CD4-positive, alpha-beta memory T cell (primary cell): ENCODE measurements at regions of chr6 and their contacts with region 1.

Region 1: GRCh38 chr6:138403801-138404661 is at the start of gene HEBP2:
- DNase-seq: peak; percentile 87 to 97 (median 90)
- H3K4me3 ChIP-seq: peak within 1 kb of the TSS; percentile 2 to 73
- H3K4me3 Mint-ChIP-seq: peak within 1 kb of the TSS; percentile 84 to 90 (median 88)
- H3K27ac ChIP-seq: peak within 1 kb of the TSS; percentile 72
- H3K27ac Mint-ChIP-seq: peak within 1 kb of the TSS; percentile 84 to 92 (median 88)
- H3K4me1 ChIP-seq: peaks cover 22% of the 10 kb centered on the region
- H3K4me1 Mint-ChIP-seq: peaks cover 13 to 30% (median 26%) of the 10 kb centered on the region in 4 donors
- H3K27me3 ChIP-seq: no peaks in the 10 kb centered on the region
- H3K27me3 Mint-ChIP-seq: no peaks in the 10 kb centered on the region
- total RNA-seq, gene HEBP2: 47.2 to 52.7 TPM

Region 2: DNA sequence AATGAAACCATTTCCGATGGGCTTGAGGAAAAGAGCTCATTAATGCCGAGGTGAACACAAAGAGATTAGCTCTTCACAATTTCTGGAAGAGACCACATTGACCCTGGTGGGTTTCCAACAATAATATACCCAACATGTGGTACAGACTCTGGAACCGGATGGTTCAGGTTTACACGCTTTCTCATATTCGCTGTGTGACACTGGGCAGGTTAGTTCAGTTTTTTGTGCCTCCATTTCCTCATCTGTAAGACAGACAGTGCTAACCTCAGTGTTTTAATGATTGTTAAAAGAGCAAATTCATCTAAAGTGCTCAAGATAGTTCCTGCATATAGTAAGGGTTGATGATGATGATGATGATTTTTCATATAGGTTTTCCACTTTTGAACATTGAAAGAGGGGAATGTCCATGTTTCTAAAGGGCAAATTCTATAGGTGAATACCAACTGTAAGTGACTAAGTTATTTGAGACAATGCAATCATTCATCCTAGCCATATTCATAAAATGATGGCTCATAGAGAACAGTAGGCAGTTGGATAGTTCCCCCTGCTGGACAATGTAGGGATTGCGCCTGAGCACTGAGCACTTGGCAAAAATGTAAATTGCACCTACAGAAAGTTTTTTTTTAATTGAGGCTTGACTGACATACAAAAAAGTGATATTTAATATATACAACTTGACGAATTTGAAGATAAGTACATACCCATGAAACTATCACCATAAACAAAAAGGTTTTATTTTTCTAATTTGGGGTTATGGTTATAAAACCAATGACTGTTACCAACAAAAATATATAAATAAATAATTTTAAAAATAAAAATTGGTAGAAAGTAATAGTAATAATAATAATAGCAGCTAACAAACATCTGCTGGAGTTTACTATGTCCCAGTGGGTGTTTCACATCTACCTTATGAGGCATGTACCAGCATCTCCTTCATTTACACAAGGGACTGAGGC is 294.7 kb before region 1 on chr6:
- CTCF ChIA-PET with region 1: interaction called, 17 read pairs
- POLR2A ChIA-PET with region 1: no interaction called
- intact Hi-C with region 1: loop called (anchors 2 kb)
- DNase-seq: peak; percentile 69 to 75 (median 75)
- H3K4me3 ChIP-seq: no peak overlapping the region
- H3K4me3 Mint-ChIP-seq: peak overlapping the region in 2 of 8 donors; percentile 52 to 55
- H3K27ac ChIP-seq: no peak overlapping the region
- H3K27ac Mint-ChIP-seq: peak overlapping the region in 3 of 7 donors; percentile 8 to 65 (median 11)
- H3K4me1 ChIP-seq: peaks cover 25% of the 10 kb centered on the region
- H3K4me1 Mint-ChIP-seq: peaks cover 16 to 37% (median 17%) of the 10 kb centered on the region in 4 donors
- H3K27me3 ChIP-seq: no peaks in the 10 kb centered on the region
- H3K27me3 Mint-ChIP-seq: peaks cover 3% of the 10 kb centered on the region in 2 donors

Region 3: GRCh38 chr6:138287144-138287955 is 116.7 kb before region 1 on chr6:
- CTCF ChIA-PET with region 1: interaction called, 3 read pairs
- POLR2A ChIA-PET with region 1: no interaction called
- intact Hi-C with region 1: loop called (anchors 10 kb)
- DNase-seq: peak; percentile 26 to 53 (median 39)
- H3K4me3 ChIP-seq: no peak overlapping the region
- H3K4me3 Mint-ChIP-seq: peak overlapping the region in 1 of 8 donors; percentile 48
- H3K27ac ChIP-seq: no peak overlapping the region
- H3K27ac Mint-ChIP-seq: peak overlapping the region in 1 of 7 donors; percentile 31
- H3K4me1 ChIP-seq: no peaks in the 10 kb centered on the region
- H3K4me1 Mint-ChIP-seq: peaks cover 0 to 1% (median 0%) of the 10 kb centered on the region in 4 donors
- H3K27me3 ChIP-seq: no peaks in the 10 kb centered on the region
- H3K27me3 Mint-ChIP-seq: peaks cover 0 to 3% of the 10 kb centered on the region in 2 donors

Region 4: GRCh38 chr6:138415125-138415524 is 11.1 kb after region 1 on chr6:
- CTCF ChIA-PET with region 1: interaction called, 3 read pairs
- POLR2A ChIA-PET with region 1: interaction called, 10 read pairs
- intact Hi-C with region 1: no loop called
- DNase-seq: no peak
- H3K4me3 ChIP-seq: no peak overlapping the region
- H3K4me3 Mint-ChIP-seq: no peak overlapping the region
- H3K27ac ChIP-seq: no peak overlapping the region
- H3K27ac Mint-ChIP-seq: no peak overlapping the region
- H3K4me1 ChIP-seq: no peaks in the 10 kb centered on the region
- H3K4me1 Mint-ChIP-seq: peaks cover 3 to 8% (median 5%) of the 10 kb centered on the region in 4 donors
- H3K27me3 ChIP-seq: no peaks in the 10 kb centered on the region
- H3K27me3 Mint-ChIP-seq: no peaks in the 10 kb centered on the region

Region 5: GRCh38 chr6:138440758-138441357 is 36.8 kb after region 1 on chr6:
- CTCF ChIA-PET with region 1: no interaction called
- POLR2A ChIA-PET with region 1: no interaction called
- intact Hi-C with region 1: no loop called
- DNase-seq: no peak
- H3K4me3 ChIP-seq: no peak overlapping the region
- H3K4me3 Mint-ChIP-seq: no peak overlapping the region
- H3K27ac ChIP-seq: no peak overlapping the region
- H3K27ac Mint-ChIP-seq: no peak overlapping the region
- H3K4me1 ChIP-seq: no peaks in the 10 kb centered on the region
- H3K4me1 Mint-ChIP-seq: no peaks in the 10 kb centered on the region
- H3K27me3 ChIP-seq: no peaks in the 10 kb centered on the region
- H3K27me3 Mint-ChIP-seq: no peaks in the 10 kb centered on the region

Region 6: GRCh38 chr6:138493413-138493812 is 89.4 kb after region 1 on chr6:
- CTCF ChIA-PET with region 1: no interaction called
- POLR2A ChIA-PET with region 1: no interaction called
- intact Hi-C with region 1: no loop called
- DNase-seq: no peak
- H3K4me3 ChIP-seq: no peak overlapping the region
- H3K4me3 Mint-ChIP-seq: no peak overlapping the region
- H3K27ac ChIP-seq: no peak overlapping the region
- H3K27ac Mint-ChIP-seq: no peak overlapping the region
- H3K4me1 ChIP-seq: no peaks in the 10 kb centered on the region
- H3K4me1 Mint-ChIP-seq: no peaks in the 10 kb centered on the region
- H3K27me3 ChIP-seq: no peaks in the 10 kb centered on the region
- H3K27me3 Mint-ChIP-seq: peaks cover 6 to 12% of the 10 kb centered on the region in 2 donors

Region 7: GRCh38 chr6:138773177-138774091 is 369.4 kb after region 1 on chr6 and contains the start of gene CCDC28A:
- CTCF ChIA-PET with region 1: no interaction called
- POLR2A ChIA-PET with region 1: interaction called, 3 read pairs
- intact Hi-C with region 1: loop called (anchors 1 kb)
- DNase-seq: peak; percentile 96 to 98 (median 97)
- H3K4me3 ChIP-seq: peak within 1 kb of the TSS; percentile 72 to 99
- H3K4me3 Mint-ChIP-seq: peak within 1 kb of the TSS; percentile 91 to 100 (median 99)
- H3K27ac ChIP-seq: peak within 1 kb of the TSS; percentile 90
- H3K27ac Mint-ChIP-seq: peak within 1 kb of the TSS; percentile 97 to 100 (median 100)
- H3K4me1 ChIP-seq: peaks cover 18% of the 10 kb centered on the region
- H3K4me1 Mint-ChIP-seq: peaks cover 12 to 46% (median 26%) of the 10 kb centered on the region in 4 donors
- H3K27me3 ChIP-seq: no peaks in the 10 kb centered on the region
- H3K27me3 Mint-ChIP-seq: peaks cover 0 to 3% of the 10 kb centered on the region in 2 donors
- total RNA-seq, gene CCDC28A: 32.4 to 33.9 TPM